Naive thymus-derived CD4-positive, alpha-beta T cell (primary cell): ENCODE measurements at regions of chr10 and their contacts with region 1.

Region 1: DNA sequence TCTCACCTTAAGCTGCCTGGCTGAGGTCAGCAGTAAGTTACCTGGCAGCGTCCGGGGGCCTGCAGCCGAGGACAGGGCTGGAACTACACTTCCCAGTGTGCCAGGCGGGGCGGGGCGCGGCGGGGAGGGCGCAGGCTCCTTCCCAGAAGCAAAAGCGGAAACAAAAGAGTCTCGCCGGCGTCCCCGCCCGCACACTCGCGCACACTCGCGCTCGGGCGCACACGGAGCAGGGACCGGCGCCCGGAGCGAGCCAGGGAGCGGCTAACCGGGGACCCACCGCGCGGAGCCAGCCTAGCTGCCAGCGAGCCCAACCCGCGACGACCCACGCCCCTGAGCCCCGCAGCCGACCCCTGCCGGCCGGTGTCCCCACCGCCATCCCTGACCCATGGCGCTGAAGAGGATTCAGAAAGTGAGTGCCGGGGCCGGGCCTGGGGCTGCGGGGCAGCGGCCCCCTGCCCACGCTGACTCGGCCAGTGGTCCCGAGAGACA is at the start of gene UBE2D1:
- DNase-seq: peak; percentile 60 to 84 (median 74)
- ATAC-seq: peak; percentile 98
- H3K4me3 ChIP-seq: peak within 1 kb of the TSS; percentile 71
- H3K4me3 Mint-ChIP-seq: peak within 1 kb of the TSS; percentile 88 to 98 (median 96)
- H3K27ac ChIP-seq: peak within 1 kb of the TSS; percentile 78
- H3K27ac Mint-ChIP-seq: peak within 1 kb of the TSS; percentile 77 to 96 (median 87)
- H3K4me1 ChIP-seq: peaks cover 0 to 15% of the 10 kb centered on the region in 2 donors
- H3K4me1 Mint-ChIP-seq: peaks cover 25 to 44% (median 38%) of the 10 kb centered on the region in 7 donors
- H3K27me3 ChIP-seq: no peaks in the 10 kb centered on the region
- H3K27me3 Mint-ChIP-seq: peaks cover 0 to 7% (median 4%) of the 10 kb centered on the region in 5 donors
- total RNA-seq, gene UBE2D1: 11.3 to 23.8 (median 12.8) TPM

Region 2: DNA sequence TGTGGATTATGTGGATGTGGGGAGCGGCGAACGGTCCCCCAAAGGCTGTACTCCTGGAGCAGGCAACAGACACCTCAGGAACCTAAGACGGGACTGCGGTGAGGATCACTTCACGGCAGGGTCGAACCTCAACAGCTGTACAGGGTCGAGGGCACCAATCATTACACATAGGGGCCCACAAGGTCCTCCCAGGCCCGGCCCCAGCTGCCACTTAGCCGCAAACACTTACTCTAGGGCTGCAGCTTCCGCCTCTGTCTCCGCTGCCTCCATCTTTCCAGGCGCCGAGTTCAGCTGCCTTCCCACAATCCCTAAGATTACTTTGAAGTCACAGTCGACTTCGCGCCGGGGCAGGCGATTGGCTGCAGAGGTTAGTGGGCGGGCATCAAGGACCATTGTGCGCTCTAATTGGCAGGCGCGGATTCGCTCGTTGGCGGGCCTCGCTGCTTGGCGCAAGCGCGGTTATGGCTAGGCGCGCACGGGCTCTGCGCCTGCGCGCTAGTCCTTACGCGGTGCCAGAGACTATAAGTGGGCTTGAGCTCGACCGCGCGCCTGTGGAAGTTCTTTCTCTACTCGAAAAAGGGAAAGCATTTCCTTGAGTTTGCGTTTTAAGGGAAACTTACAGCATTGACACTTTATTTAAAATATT is 1973.8 kb before region 1 on chr10 and contains the start of gene ZWINT:
- CTCF ChIA-PET with region 1: no interaction called
- POLR2A ChIA-PET with region 1: no interaction called
- intact Hi-C with region 1: loop called in 1 of 2 experiments (anchors 10 kb)
- DNase-seq: peak; percentile 86 to 92 (median 90)
- ATAC-seq: peak; percentile 98
- H3K4me3 ChIP-seq: peak within 1 kb of the TSS; percentile 75
- H3K4me3 Mint-ChIP-seq: peak within 1 kb of the TSS; percentile 84 to 99 (median 96)
- H3K27ac ChIP-seq: peak within 1 kb of the TSS; percentile 62
- H3K27ac Mint-ChIP-seq: peak within 1 kb of the TSS; percentile 75 to 95 (median 88)
- H3K4me1 ChIP-seq: peaks cover 4 to 8% of the 10 kb centered on the region in 2 donors
- H3K4me1 Mint-ChIP-seq: peaks cover 9 to 49% (median 21%) of the 10 kb centered on the region in 7 donors
- H3K27me3 ChIP-seq: no peaks in the 10 kb centered on the region
- H3K27me3 Mint-ChIP-seq: no peaks in the 10 kb centered on the region
- total RNA-seq, gene ZWINT: 2.5 to 78.7 (median 3.5) TPM

Region 3: GRCh38 chr10:58054881-58055280 is 280.0 kb before region 1 on chr10:
- CTCF ChIA-PET with region 1: no interaction called
- POLR2A ChIA-PET with region 1: no interaction called
- intact Hi-C with region 1: no loop called
- DNase-seq: no peak
- ATAC-seq: no peak
- H3K4me3 ChIP-seq: no peak overlapping the region
- H3K4me3 Mint-ChIP-seq: no peak overlapping the region
- H3K27ac ChIP-seq: no peak overlapping the region
- H3K27ac Mint-ChIP-seq: no peak overlapping the region
- H3K4me1 ChIP-seq: no peaks in the 10 kb centered on the region
- H3K4me1 Mint-ChIP-seq: no peaks in the 10 kb centered on the region
- H3K27me3 ChIP-seq: peaks cover 0 to 3% of the 10 kb centered on the region in 2 donors
- H3K27me3 Mint-ChIP-seq: peaks cover 0 to 9% (median 6%) of the 10 kb centered on the region in 5 donors

Region 4: GRCh38 chr10:58291538-58292174 is 43.2 kb before region 1 on chr10:
- CTCF ChIA-PET with region 1: no interaction called
- POLR2A ChIA-PET with region 1: no interaction called
- intact Hi-C with region 1: loop called in 1 of 2 experiments (anchors 5 kb)
- DNase-seq: peak in 7 of 9 donors; percentile 23 to 59 (median 44)
- ATAC-seq: peak; percentile 86
- H3K4me3 ChIP-seq: no peak overlapping the region
- H3K4me3 Mint-ChIP-seq: no peak overlapping the region
- H3K27ac ChIP-seq: no peak overlapping the region
- H3K27ac Mint-ChIP-seq: peak overlapping the region in 2 of 9 donors; percentile 60 to 76
- H3K4me1 ChIP-seq: no peaks in the 10 kb centered on the region
- H3K4me1 Mint-ChIP-seq: peaks cover 0 to 5% (median 3%) of the 10 kb centered on the region in 7 donors
- H3K27me3 ChIP-seq: no peaks in the 10 kb centered on the region
- H3K27me3 Mint-ChIP-seq: no peaks in the 10 kb centered on the region

Region 5: DNA sequence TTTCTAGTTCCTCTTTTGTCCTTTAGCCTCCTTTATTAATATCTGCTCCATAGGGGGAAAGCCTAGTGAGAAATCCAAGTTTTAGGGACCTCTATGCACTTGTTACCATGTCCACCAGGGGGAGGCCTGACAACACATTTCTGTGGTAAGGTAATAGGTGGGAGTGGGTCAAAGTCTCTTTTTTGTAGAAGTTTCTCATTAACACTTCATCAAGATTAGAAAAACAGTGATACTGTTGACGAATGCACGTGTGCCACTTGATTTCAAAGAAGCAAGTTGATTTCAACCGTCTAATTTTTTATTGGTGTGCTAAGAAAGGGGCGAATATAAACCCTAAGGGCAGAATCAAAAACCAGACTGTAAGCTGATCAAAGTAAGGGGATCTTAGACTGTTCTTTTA is 35.3 kb before region 1 on chr10:
- CTCF ChIA-PET with region 1: interaction called, 3 read pairs
- POLR2A ChIA-PET with region 1: no interaction called
- intact Hi-C with region 1: loop called (anchors 1 to 5 kb)
- DNase-seq: peak; percentile 18 to 63 (median 49)
- ATAC-seq: peak; percentile 94
- H3K4me3 ChIP-seq: no peak overlapping the region
- H3K4me3 Mint-ChIP-seq: no peak overlapping the region
- H3K27ac ChIP-seq: no peak overlapping the region
- H3K27ac Mint-ChIP-seq: no peak overlapping the region
- H3K4me1 ChIP-seq: no peaks in the 10 kb centered on the region
- H3K4me1 Mint-ChIP-seq: peaks cover 0 to 5% (median 0%) of the 10 kb centered on the region in 7 donors
- H3K27me3 ChIP-seq: no peaks in the 10 kb centered on the region
- H3K27me3 Mint-ChIP-seq: peaks cover 9 to 25% (median 14%) of the 10 kb centered on the region in 5 donors

Region 6: GRCh38 chr10:58348571-58349033 is 13.7 kb after region 1 on chr10:
- CTCF ChIA-PET with region 1: no interaction called
- POLR2A ChIA-PET with region 1: interaction called, 3 read pairs
- intact Hi-C with region 1: loop called in 1 of 2 experiments (anchors 2 kb)
- DNase-seq: no peak
- ATAC-seq: no peak
- H3K4me3 ChIP-seq: no peak overlapping the region
- H3K4me3 Mint-ChIP-seq: no peak overlapping the region
- H3K27ac ChIP-seq: no peak overlapping the region
- H3K27ac Mint-ChIP-seq: no peak overlapping the region
- H3K4me1 ChIP-seq: no peaks in the 10 kb centered on the region
- H3K4me1 Mint-ChIP-seq: peaks cover 10 to 67% (median 51%) of the 10 kb centered on the region in 7 donors
- H3K27me3 ChIP-seq: no peaks in the 10 kb centered on the region
- H3K27me3 Mint-ChIP-seq: no peaks in the 10 kb centered on the region

Region 7: GRCh38 chr10:58424176-58424575 is 89.3 kb after region 1 on chr10:
- CTCF ChIA-PET with region 1: no interaction called
- POLR2A ChIA-PET with region 1: no interaction called
- intact Hi-C with region 1: no loop called
- DNase-seq: no peak
- ATAC-seq: no peak
- H3K4me3 ChIP-seq: no peak overlapping the region
- H3K4me3 Mint-ChIP-seq: no peak overlapping the region
- H3K27ac ChIP-seq: no peak overlapping the region
- H3K27ac Mint-ChIP-seq: no peak overlapping the region
- H3K4me1 ChIP-seq: no peaks in the 10 kb centered on the region
- H3K4me1 Mint-ChIP-seq: no peaks in the 10 kb centered on the region
- H3K27me3 ChIP-seq: no peaks in the 10 kb centered on the region
- H3K27me3 Mint-ChIP-seq: peaks cover 3 to 37% (median 6%) of the 10 kb centered on the region in 5 donors

Region 8: GRCh38 chr10:59872892-59873463 is 1538.1 kb after region 1 on chr10:
- CTCF ChIA-PET with region 1: no interaction called
- POLR2A ChIA-PET with region 1: no interaction called
- intact Hi-C with region 1: no loop called
- DNase-seq: peak in 5 of 9 donors; percentile 4 to 28 (median 19)
- ATAC-seq: peak; percentile 44
- H3K4me3 ChIP-seq: no peak overlapping the region
- H3K4me3 Mint-ChIP-seq: peak overlapping the region; percentile 50 to 85 (median 72)
- H3K27ac ChIP-seq: no peak overlapping the region
- H3K27ac Mint-ChIP-seq: peak overlapping the region; percentile 52 to 93 (median 74)
- H3K4me1 ChIP-seq: peaks cover 5 to 20% of the 10 kb centered on the region in 2 donors
- H3K4me1 Mint-ChIP-seq: peaks cover 42 to 88% (median 77%) of the 10 kb centered on the region in 7 donors
- H3K27me3 ChIP-seq: no peaks in the 10 kb centered on the region
- H3K27me3 Mint-ChIP-seq: no peaks in the 10 kb centered on the region